ENCODE measurements at regions of chr15 and their contacts with region 1.

Region 1: GRCh38 chr15:68817304-68818065 is 3.2 kb downstream of the ANP32A start:
- DNase-seq: peak; percentile 43

Region 2: DNA sequence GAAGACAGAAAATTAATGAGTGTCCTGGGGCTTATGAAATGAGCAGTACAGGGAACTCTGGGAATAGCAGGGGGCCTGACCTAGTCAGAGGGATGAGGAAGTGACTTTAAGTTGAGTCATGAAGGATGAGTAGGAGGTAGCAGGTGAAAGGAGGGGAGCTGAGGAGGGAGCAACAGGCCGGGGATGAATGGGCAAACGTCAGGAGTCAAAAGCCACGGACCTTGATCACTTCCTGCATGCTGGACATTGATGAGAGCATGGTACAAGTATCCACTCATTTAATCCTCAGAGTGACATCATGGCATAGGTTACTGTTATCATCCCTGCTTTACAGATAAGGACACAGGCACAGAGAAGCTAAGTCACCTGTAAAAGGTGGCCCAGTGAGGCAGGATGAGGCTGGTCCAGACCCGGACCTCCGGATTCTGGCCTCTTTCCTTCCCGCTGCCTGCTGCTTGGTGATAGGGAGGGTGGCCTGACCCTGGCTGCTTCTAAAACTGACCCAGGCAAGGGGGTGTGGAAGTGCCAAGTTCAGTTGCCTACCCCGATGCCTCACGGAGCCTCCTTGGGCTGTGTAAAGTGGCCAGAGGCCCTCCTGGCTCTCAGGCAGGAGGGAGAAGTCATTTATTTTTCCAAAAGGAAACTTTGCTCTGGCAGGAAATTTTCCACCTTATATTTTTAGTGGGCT is 231.1 kb before region 1 on chr15:
- CTCF ChIA-PET with region 1: no interaction called
- POLR2A ChIA-PET with region 1: no interaction called
- DNase-seq: no peak

Region 3: DNA sequence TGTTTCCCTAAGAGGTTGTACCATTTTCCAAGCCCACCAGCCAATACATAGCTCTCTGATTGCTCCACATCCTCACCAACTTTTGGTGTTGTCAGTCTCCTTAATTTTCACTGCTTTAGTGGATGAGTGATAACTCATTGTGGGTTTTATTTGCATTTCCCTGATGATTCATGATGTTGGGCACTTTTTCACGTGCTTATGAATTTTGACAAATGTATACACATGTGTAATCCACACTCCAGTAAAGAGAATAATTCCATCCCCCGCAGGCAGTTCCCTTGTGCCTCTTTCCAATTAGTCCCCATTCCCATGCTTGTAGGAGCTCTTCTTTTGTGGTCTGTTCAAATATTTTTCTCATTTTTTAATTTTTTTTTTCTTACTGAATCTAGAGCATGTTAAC is 49.2 kb before region 1 on chr15:
- CTCF ChIA-PET with region 1: no interaction called
- POLR2A ChIA-PET with region 1: interaction called, 12 read pairs
- DNase-seq: no peak

Region 4: DNA sequence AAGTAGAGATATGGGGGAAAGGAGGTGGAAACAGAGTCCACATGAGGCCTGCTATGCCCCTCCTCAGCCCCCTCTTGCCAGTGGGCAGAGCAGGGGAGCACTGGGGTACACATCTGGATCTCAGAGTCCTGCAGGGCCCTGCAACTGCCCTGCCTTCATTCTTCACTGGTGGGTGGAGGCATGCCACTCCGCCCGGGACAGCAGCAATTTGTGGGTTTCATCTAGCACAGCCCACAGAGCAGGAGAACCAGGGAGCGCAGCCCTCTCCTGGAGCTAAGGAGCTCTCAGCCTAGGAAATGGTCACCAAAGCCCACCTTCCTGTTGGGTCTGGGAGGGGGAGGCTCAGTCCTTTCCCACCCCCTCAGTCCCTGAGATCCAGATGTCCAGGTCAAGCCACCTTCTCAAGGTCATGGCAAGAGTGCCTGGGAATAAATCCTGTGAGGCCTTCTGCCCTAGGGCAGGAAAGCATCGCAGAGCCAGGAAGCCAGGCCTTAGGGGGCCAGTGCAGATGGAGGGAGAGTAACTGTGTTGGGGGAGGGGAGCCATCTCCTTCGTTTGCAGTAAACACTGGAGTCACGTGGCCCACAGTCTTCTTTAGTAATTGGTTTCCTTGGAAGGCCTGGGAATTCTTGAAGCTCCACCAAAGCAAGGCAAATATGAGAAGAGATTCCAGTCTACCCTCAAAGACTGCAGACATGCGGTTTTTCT is 27.8 kb before region 1 on chr15:
- CTCF ChIA-PET with region 1: no interaction called
- POLR2A ChIA-PET with region 1: interaction called, 37 read pairs
- DNase-seq: no peak

Region 5: GRCh38 chr15:68795298-68795848 is 22.1 kb before region 1 on chr15:
- CTCF ChIA-PET with region 1: no interaction called
- POLR2A ChIA-PET with region 1: interaction called, 37 read pairs
- DNase-seq: peak; percentile 21